Activated CD8-positive, alpha-beta T cell treated with anti-CD3 and anti-CD28 coated beads for 36 hours (primary cell): ENCODE measurements at regions of chr11 and their contacts with region 1.

Region 1: GRCh38 chr11:118295834-118296454 is 8.6 kb upstream of the CD3E start:
- DNase-seq: peak; percentile 70
- ATAC-seq: peak; percentile 77
- H3K4me3 Mint-ChIP-seq: no peak overlapping the region
- H3K27ac Mint-ChIP-seq: peak overlapping the region; percentile 36
- H3K4me1 Mint-ChIP-seq: peaks cover 19% of the 10 kb centered on the region
- H3K27me3 Mint-ChIP-seq: no peaks in the 10 kb centered on the region
- CTCF ChIP-seq: peak; percentile 78

Region 2: GRCh38 chr11:118251858-118252652 is 43.9 kb before region 1 on chr11 and contains the start of gene MPZL3:
- CTCF ChIA-PET with region 1: interaction called, 15 read pairs
- POLR2A ChIA-PET with region 1: interaction called, 3 read pairs
- intact Hi-C with region 1: loop called (anchors 5 kb)
- DNase-seq: peak; percentile 92
- ATAC-seq: peak; percentile 72
- H3K4me3 Mint-ChIP-seq: peak within 1 kb of the TSS; percentile 93
- H3K27ac Mint-ChIP-seq: peak within 1 kb of the TSS; percentile 99
- H3K4me1 Mint-ChIP-seq: peaks cover 49% of the 10 kb centered on the region
- H3K27me3 Mint-ChIP-seq: no peaks in the 10 kb centered on the region
- CTCF ChIP-seq: no peak
- total RNA-seq, gene MPZL3: 51.1 to 51.7 TPM

Region 3: DNA sequence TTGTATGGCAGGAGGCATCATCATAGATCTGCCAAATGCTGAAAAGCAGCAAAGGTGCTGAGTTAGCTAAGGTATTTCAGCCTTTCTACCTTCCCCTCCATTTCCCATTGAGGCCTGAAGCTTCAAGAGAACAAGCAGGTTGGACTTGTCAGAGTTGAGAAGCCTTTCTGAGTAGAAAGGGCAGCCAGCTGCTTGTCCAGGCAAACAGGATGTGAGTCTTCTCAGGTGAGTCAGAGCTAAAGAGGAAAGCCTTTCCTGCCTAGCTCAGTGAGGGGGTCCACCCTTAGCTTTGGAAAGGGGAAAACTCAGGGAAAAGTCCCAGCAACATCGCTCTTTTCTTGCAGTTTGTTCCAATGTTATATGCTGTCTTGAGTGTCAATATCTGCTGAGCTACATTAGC is 18.6 kb before region 1 on chr11:
- CTCF ChIA-PET with region 1: interaction called, 65 read pairs
- POLR2A ChIA-PET with region 1: no interaction called
- intact Hi-C with region 1: no loop called
- DNase-seq: peak; percentile 49
- ATAC-seq: peak; percentile 74
- H3K4me3 Mint-ChIP-seq: no peak overlapping the region
- H3K27ac Mint-ChIP-seq: peak overlapping the region; percentile 14
- H3K4me1 Mint-ChIP-seq: peaks cover 52% of the 10 kb centered on the region
- H3K27me3 Mint-ChIP-seq: no peaks in the 10 kb centered on the region
- CTCF ChIP-seq: no peak

Region 4: DNA sequence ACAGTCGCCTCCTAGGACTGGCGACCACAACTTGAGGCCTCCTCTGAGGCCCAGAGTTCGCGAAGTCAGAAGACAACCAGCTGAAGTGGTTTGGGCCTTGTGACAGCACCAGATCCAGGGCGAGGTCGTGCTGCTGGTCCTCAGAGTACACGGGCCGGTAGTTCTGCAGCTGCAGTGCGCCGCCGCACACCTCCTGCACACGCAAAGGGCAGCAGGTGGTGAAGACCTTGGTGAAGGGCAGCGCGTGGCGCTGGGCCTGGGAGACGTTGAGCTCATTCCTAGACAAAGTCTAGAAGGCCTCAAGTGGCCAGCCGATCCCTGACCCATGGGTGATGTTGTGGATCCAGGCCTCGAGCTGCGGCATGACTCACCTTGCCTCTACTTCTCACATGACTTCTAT is 26.8 kb after region 1 on chr11:
- CTCF ChIA-PET with region 1: interaction called, 10 read pairs
- POLR2A ChIA-PET with region 1: interaction called, 4 read pairs
- intact Hi-C with region 1: no loop called
- DNase-seq: no peak
- ATAC-seq: no peak
- H3K4me3 Mint-ChIP-seq: no peak overlapping the region
- H3K27ac Mint-ChIP-seq: no peak overlapping the region
- H3K4me1 Mint-ChIP-seq: peaks cover 51% of the 10 kb centered on the region
- H3K27me3 Mint-ChIP-seq: no peaks in the 10 kb centered on the region
- CTCF ChIP-seq: no peak

Region 5: DNA sequence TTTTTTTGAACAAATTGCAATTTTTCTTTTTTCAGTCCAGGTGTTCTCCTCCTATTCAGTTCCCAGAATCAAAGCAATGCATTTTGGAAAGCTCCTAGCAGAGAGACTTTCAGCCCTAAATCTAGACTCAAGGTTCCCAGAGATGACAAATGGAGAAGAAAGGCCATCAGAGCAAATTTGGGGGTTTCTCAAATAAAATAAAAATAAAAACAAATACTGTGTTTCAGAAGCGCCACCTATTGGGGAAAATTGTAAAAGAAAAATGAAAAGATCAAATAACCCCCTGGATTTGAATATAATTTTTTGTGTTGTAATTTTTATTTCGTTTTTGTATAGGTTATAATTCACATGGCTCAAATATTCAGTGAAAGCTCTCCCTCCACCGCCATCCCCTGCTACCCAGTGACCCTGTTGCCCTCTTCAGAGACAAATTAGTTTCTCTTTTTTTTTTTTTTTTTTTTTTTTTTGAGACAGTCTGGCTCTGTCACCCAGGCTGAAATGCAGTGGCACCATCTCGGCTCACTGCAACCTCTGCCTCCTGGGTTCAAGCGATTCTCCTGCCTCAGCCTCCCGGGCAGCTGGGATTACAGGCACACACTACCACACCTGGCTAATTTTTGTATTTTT is 57.3 kb after region 1 on chr11:
- CTCF ChIA-PET with region 1: interaction called, 46 read pairs
- POLR2A ChIA-PET with region 1: no interaction called
- intact Hi-C with region 1: no loop called
- DNase-seq: no peak
- ATAC-seq: peak; percentile 21
- H3K4me3 Mint-ChIP-seq: no peak overlapping the region
- H3K27ac Mint-ChIP-seq: peak overlapping the region; percentile 86
- H3K4me1 Mint-ChIP-seq: peaks cover 33% of the 10 kb centered on the region
- H3K27me3 Mint-ChIP-seq: no peaks in the 10 kb centered on the region
- CTCF ChIP-seq: peak; percentile 83